H1 (cell line): ENCODE measurements at regions of chr17 and their contacts with region 1.

Region 1: GRCh38 chr17:17613708-17614114 is 22.2 kb upstream of the PEMT start:
- DNase-seq: peak in 1 of 2 experiments; percentile 78
- H3K4me3 ChIP-seq: no peak overlapping the region
- H3K27ac ChIP-seq: no peak overlapping the region
- H3K4me1 ChIP-seq: peaks cover 0 to 3% (median under 1%) of the 10 kb centered on the region in 4 experiments; a peak in 4 of 7 replicates
- H3K27me3 ChIP-seq: no peaks in the 10 kb centered on the region
- CTCF ChIP-seq: peak in 2 of 3 experiments; percentile 64 to 82; a peak in 3 of 4 replicates
- EP300 ChIP-seq: no peak
- POLR2A ChIP-seq: no peak
- RAD21 ChIP-seq: peak; percentile 42 to 70

Region 2: DNA sequence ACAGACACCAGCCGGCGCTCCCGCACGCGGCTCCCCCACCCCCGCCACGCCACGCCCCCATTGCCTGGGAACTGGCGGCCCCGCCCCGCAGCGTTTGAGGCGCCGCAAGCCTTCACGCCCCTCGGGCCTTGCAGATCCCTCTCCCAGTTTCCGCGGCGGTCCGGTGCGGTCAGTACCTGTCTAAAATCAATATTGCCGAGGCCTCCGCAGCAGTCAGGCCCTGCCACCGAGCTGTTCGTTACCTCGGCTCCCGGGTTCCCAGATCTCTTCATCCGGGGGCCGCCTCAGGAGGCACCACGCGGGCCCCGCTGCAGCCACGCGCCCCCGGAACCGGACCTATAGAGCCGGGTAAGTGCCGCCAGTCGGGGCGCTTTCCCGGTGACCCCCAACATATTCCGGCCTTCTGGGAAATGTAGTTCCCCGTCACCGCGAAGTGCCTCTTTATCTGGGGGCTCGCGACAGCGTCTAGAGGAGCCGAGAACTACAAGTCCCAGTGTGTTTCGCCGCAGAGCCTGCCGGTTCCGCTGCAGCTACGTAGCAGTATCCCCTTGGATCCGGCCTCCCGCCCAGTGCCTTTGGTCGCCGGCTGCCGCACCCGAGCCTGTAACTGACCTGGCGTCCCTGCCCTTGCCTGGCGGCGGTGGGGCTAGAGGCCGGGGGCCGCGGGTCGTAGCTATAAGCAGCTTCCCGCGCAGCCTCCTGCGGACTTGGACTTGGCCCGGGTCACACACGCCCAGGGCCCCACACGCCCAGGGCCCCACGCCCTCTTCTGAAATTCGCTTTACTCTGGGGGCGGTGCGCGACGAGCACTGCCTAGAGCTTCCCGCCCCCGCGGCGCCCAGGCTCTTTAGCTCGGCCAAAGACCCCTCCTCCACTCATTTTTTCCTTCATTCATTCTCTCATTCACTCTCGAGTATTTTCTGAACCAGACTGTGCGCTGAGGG is 22.1 kb before region 1 on chr17 and contains the start of gene PEMT:
- CTCF ChIA-PET with region 1: interaction called, 20 read pairs
- POLR2A ChIA-PET with region 1: interaction called, 5 read pairs
- DNase-seq: peak; percentile 90 to 93
- H3K4me3 ChIP-seq: peak within 1 kb of the TSS; percentile 69 to 87 (median 86)
- H3K27ac ChIP-seq: peak within 1 kb of the TSS; percentile 60; the same call in 1 of the 2 replicates
- H3K4me1 ChIP-seq: peaks cover 0 to 10% (median 2%) of the 10 kb centered on the region in 4 experiments; a peak in 4 of 7 replicates
- H3K27me3 ChIP-seq: no peaks in the 10 kb centered on the region
- CTCF ChIP-seq: no peak
- EP300 ChIP-seq: peak in 1 of 2 experiments; percentile 9; a peak in 1 of 3 replicates
- POLR2A ChIP-seq: peak; percentile 4 to 78; a peak in 2 of 3 replicates
- RAD21 ChIP-seq: no peak
- total RNA-seq, gene PEMT: 40.1 and 42.0 TPM in 2 replicates

Region 3: GRCh38 chr17:17603178-17603894 is 10.4 kb before region 1 on chr17:
- CTCF ChIA-PET with region 1: interaction called, 35 read pairs
- POLR2A ChIA-PET with region 1: no interaction called
- DNase-seq: no peak
- H3K4me3 ChIP-seq: no peak overlapping the region
- H3K27ac ChIP-seq: no peak overlapping the region
- H3K4me1 ChIP-seq: peaks cover 0 to 3% (median 0%) of the 10 kb centered on the region in 4 experiments; a peak in 1 of 7 replicates
- H3K27me3 ChIP-seq: no peaks in the 10 kb centered on the region
- CTCF ChIP-seq: no peak
- EP300 ChIP-seq: no peak
- POLR2A ChIP-seq: no peak
- RAD21 ChIP-seq: no peak

Region 4: DNA sequence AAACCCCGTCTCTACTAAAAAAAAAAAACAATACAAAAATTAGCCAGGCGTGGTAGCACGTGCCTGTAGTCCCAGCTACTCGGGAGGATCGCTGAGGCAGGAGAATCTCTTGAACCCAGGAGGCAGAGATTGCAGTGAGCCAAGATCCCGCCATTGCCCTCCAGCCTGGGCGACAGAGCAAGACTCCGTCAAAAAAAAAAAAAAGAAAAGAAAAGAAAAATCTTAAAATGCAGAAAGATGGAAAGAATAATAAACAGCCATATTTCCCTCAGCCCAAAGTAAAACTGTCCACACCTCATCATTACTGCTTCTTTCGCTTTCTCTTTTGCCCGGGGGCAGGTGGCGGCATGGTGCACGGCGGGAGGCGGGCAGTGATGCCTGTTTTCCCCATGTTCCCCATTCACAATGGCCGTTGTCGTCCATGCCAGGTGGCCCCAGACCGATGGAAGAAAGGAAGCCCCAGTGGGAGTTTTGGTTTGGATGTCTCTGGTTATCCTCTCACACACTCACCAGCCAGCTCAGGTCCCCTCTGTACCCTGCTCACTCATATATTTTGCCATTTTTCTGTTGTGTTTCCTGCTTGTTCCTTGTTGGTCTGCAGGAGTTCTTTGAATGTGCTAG is 14.8 kb after region 1 on chr17:
- CTCF ChIA-PET with region 1: interaction called, 28 read pairs
- POLR2A ChIA-PET with region 1: interaction called, 4 read pairs
- DNase-seq: no peak
- H3K4me3 ChIP-seq: no peak overlapping the region
- H3K27ac ChIP-seq: no peak overlapping the region
- H3K4me1 ChIP-seq: peaks cover 0 to 16% (median 15%) of the 10 kb centered on the region in 4 experiments; a peak in 6 of 7 replicates
- H3K27me3 ChIP-seq: no peaks in the 10 kb centered on the region; a peak in 1 of 7 replicates
- CTCF ChIP-seq: no peak
- EP300 ChIP-seq: no peak
- POLR2A ChIP-seq: no peak
- RAD21 ChIP-seq: no peak

Region 5: GRCh38 chr17:17663160-17664063 is 49.7 kb after region 1 on chr17:
- CTCF ChIA-PET with region 1: no interaction called
- POLR2A ChIA-PET with region 1: no interaction called
- DNase-seq: peak; percentile 60 to 66
- H3K4me3 ChIP-seq: no peak overlapping the region
- H3K27ac ChIP-seq: no peak overlapping the region
- H3K4me1 ChIP-seq: peaks cover 0 to 8% (median 6%) of the 10 kb centered on the region in 4 experiments; a peak in 6 of 7 replicates
- H3K27me3 ChIP-seq: no peaks in the 10 kb centered on the region; a peak in 1 of 7 replicates
- CTCF ChIP-seq: no peak
- EP300 ChIP-seq: no peak
- POLR2A ChIP-seq: no peak
- RAD21 ChIP-seq: no peak

Region 6: GRCh38 chr17:17877529-17878358 is 264.0 kb after region 1 on chr17:
- CTCF ChIA-PET with region 1: no interaction called
- POLR2A ChIA-PET with region 1: no interaction called
- DNase-seq: no peak
- H3K4me3 ChIP-seq: no peak overlapping the region
- H3K27ac ChIP-seq: no peak overlapping the region
- H3K4me1 ChIP-seq: peaks cover 11 to 28% (median 18%) of the 10 kb centered on the region in 4 experiments
- H3K27me3 ChIP-seq: no peaks in the 10 kb centered on the region; a peak in 1 of 7 replicates
- CTCF ChIP-seq: 0 out of 4 replicates have a peak, but pooled peaks of 1 of the 3 experiments have one; percentile 6
- EP300 ChIP-seq: no peak
- POLR2A ChIP-seq: no peak
- RAD21 ChIP-seq: no peak